ENCODE measurements at regions of chr14 and their contacts with region 1.

Region 1: GRCh38 chr14:61456720-61457119 is 135.3 kb downstream of the PRKCH start:
- DNase-seq: peak; percentile 89
- ATAC-seq: peak; percentile 22
- H3K4me3 Mint-ChIP-seq: no peak overlapping the region
- H3K27ac Mint-ChIP-seq: peak overlapping the region; percentile 79
- H3K4me1 Mint-ChIP-seq: peaks cover 91% of the 10 kb centered on the region
- H3K27me3 Mint-ChIP-seq: no peaks in the 10 kb centered on the region

Region 2: GRCh38 chr14:61321385-61322010 is 135.2 kb before region 1 on chr14 and contains the start of gene PRKCH:
- CTCF ChIA-PET with region 1: interaction called, 4 read pairs
- POLR2A ChIA-PET with region 1: interaction called, 11 read pairs
- DNase-seq: peak; percentile 93
- ATAC-seq: peak; percentile 79
- H3K4me3 Mint-ChIP-seq: peak within 1 kb of the TSS; percentile 94
- H3K27ac Mint-ChIP-seq: peak within 1 kb of the TSS; percentile 92
- H3K4me1 Mint-ChIP-seq: peaks cover 22% of the 10 kb centered on the region
- H3K27me3 Mint-ChIP-seq: no peaks in the 10 kb centered on the region
- total RNA-seq, gene PRKCH: 318 to 343 TPM

Region 3: DNA sequence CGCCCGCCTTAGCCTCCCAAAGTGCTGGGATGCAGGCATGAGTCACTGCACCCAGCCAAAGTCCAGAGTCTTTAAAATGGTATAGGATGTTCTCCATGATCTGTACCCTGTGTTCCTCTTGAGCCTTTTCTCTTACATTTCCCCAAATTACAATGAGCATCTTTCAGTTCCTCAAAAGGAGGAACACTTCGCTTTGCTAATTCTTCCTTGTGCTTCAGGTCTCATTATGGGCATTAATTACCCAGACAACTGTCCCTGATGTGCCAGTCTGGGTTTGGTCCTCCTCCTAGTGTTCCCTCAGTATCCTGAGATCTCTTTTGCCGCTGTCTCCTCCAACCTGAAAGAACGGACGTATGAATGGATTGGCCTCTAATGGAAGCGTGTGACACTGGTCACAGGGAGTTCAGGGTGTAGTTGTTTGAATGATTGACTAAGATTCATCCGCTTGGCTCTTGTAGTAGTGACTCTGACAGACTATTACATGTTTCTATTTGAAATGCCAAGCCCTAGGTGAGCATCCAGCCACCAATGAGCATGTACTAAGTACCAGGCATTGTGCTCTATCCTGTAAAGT is 127.2 kb before region 1 on chr14:
- CTCF ChIA-PET with region 1: interaction called, 22 read pairs
- POLR2A ChIA-PET with region 1: interaction called, 17 read pairs
- DNase-seq: no peak
- ATAC-seq: no peak
- H3K4me3 Mint-ChIP-seq: peak overlapping the region; percentile 94
- H3K27ac Mint-ChIP-seq: peak overlapping the region; percentile 85
- H3K4me1 Mint-ChIP-seq: peaks cover 77% of the 10 kb centered on the region
- H3K27me3 Mint-ChIP-seq: no peaks in the 10 kb centered on the region

Region 4: GRCh38 chr14:61335671-61336275 is 120.9 kb before region 1 on chr14:
- CTCF ChIA-PET with region 1: interaction called, 22 read pairs
- POLR2A ChIA-PET with region 1: interaction called, 17 read pairs
- DNase-seq: peak; percentile 55
- ATAC-seq: peak; percentile 45
- H3K4me3 Mint-ChIP-seq: peak overlapping the region; percentile 74
- H3K27ac Mint-ChIP-seq: peak overlapping the region; percentile 88
- H3K4me1 Mint-ChIP-seq: peaks cover 84% of the 10 kb centered on the region
- H3K27me3 Mint-ChIP-seq: no peaks in the 10 kb centered on the region

Region 5: GRCh38 chr14:61342486-61342885 is 114.2 kb before region 1 on chr14:
- CTCF ChIA-PET with region 1: interaction called, 22 read pairs
- POLR2A ChIA-PET with region 1: interaction called, 21 read pairs
- DNase-seq: peak; percentile 92
- ATAC-seq: peak; percentile 64
- H3K4me3 Mint-ChIP-seq: peak overlapping the region; percentile 72
- H3K27ac Mint-ChIP-seq: peak overlapping the region; percentile 90
- H3K4me1 Mint-ChIP-seq: peaks cover 95% of the 10 kb centered on the region
- H3K27me3 Mint-ChIP-seq: no peaks in the 10 kb centered on the region

Region 6: DNA sequence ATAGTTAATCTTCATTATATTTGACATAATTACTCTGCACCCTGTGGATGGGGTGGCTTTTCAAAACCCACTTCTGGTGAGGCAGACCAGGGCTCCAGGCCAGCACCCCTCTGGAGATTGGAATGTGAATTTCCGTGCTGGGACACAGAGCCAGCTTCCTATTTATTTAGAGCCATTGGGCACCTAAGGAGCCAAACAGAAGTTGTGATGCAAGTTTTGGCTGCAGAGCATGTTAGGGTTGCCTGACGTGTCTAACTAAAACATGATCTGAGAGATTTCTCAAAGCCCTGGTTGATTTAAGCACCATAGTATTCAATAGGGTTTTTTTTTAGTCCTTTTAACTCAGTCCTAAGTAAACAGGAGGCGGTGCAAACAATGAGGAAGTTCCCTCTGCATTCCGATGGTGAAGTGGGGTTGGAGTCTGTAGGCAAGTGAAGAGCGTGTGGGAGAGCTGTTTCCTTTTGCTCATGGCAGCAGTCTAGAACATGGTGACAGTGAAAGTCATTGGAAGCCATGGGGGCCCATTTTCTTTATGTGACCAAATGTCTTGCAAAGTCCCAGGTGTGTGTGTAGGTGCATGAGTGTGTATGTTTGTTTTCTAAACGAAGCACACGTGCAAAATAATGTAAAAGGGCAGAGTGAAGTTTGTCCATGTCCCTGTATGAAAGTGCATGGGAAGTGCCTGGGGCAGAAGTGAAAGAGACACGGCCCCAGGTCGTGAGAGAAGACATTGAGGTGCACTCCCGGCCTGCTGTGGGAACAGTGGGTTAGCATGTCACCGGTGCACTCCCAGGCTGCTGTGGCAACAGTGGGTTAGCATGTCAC is 17.6 kb before region 1 on chr14:
- CTCF ChIA-PET with region 1: interaction called, 3 read pairs
- POLR2A ChIA-PET with region 1: interaction called, 15 read pairs
- DNase-seq: peak; percentile 68
- ATAC-seq: peak; percentile 68
- H3K4me3 Mint-ChIP-seq: peak overlapping the region; percentile 76
- H3K27ac Mint-ChIP-seq: peak overlapping the region; percentile 87
- H3K4me1 Mint-ChIP-seq: peaks cover 92% of the 10 kb centered on the region
- H3K27me3 Mint-ChIP-seq: no peaks in the 10 kb centered on the region

Measured in activated CD8-positive, alpha-beta T cell treated with anti-CD3 and anti-CD28 coated beads, Interleukin-2, amount 10 ng/mL, durations not matched to agents 7 days and 5 days (primary cell).